CD4-positive, alpha-beta T cell (primary cell): ENCODE measurements at regions of chr7 and their contacts with region 1.

Region 1: DNA sequence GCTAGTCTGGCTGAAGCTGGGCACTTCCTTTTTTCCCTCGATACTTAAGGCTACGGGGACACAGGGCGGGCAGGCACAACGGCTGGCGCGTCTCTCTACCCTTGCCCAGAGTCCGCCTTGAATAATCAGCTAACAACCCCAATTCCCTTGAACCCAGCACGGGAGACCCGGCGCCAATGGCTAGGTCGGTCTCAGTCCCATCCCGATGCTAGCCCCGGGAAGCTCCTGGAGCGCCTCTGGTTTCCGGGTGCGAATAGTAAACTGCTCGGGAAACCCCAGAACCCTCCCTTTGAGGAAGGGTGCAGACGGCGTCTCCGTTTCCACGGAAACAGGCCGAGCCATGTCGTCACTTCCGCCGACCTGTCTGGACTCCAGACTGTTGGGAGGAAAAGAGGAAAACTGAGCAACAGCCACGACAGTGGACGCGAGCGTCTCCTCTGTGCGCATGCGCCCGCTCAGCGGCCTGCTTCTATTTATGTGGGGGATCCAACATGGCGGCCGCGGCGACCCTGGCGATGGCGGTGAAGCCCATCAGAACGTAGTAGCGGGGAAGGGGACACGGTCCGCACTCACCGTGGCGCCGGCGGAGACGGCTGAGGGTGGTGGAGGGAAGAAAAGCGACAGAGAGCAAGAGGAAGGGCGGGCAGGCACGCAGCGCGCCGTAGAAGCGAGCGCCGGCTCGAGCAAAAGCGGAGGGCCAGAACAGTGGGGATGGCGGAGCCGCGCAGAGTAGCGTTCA is at the start of gene UBN2:
- DNase-seq: peak; percentile 70 to 96 (median 85)
- ATAC-seq: peak; percentile 66
- H3K4me3 ChIP-seq: peak within 1 kb of the TSS; percentile 97
- H3K4me3 Mint-ChIP-seq: peak within 1 kb of the TSS; percentile 97
- H3K27ac ChIP-seq: peak within 1 kb of the TSS; percentile 60 to 74
- H3K27ac Mint-ChIP-seq: peak within 1 kb of the TSS; percentile 89
- H3K4me1 ChIP-seq: peaks cover 11% of the 10 kb centered on the region
- H3K4me1 Mint-ChIP-seq: peaks cover 48% of the 10 kb centered on the region
- H3K27me3 ChIP-seq: no peaks in the 10 kb centered on the region
- H3K27me3 Mint-ChIP-seq: peaks cover 5% of the 10 kb centered on the region
- CTCF ChIP-seq: no peak
- total RNA-seq, gene UBN2: 9.6 to 13.3 TPM

Region 2: DNA sequence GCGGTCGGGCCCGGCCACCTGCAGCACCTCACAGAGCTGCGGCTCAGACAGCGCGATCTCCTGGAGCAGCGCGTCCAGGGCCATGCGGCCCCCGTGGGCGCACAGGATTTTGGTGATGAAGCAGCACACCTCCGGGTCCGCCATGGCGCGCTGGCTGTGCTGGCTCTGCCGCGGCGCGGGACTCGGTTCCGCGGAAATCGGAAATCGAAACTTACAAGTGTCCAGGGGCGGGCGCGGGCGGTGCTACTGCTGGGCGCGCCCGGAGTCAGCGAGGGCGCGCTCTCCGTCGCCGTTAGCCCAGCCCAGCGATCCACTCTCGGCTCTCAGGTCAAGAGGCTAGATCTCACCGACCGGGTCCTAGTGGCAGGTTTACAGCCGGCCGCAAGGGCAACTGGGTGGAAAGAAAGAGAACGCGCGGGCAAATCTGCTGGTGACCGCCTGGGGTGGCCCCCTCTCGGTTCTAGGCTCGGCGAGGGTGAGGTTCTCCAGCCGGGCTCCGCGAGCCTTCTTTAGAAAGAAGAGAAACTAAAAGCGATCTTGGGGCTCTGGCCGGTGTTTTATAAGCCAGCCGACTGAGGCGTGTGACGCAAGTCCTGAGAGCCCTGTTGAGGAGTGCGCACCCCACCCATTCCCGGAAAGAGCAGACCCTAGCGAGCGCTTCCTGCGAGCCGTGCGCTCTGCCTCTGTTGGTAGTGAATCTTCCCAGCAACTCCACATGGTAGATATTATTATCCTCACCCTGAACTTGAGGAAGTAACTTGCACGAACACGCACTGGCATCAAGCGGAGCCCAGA is 121.6 kb before region 1 on chr7 and contains the start of gene ZC3HAV1:
- CTCF ChIA-PET with region 1: no interaction called
- POLR2A ChIA-PET with region 1: no interaction called
- intact Hi-C with region 1: loop called in 1 of 2 experiments (anchors 5 kb)
- DNase-seq: peak; percentile 80 to 97 (median 88)
- ATAC-seq: peak; percentile 86
- H3K4me3 ChIP-seq: peak within 1 kb of the TSS; percentile 97
- H3K4me3 Mint-ChIP-seq: peak within 1 kb of the TSS; percentile 99
- H3K27ac ChIP-seq: peak within 1 kb of the TSS; percentile 97 to 98
- H3K27ac Mint-ChIP-seq: peak within 1 kb of the TSS; percentile 95
- H3K4me1 ChIP-seq: peaks cover 35% of the 10 kb centered on the region
- H3K4me1 Mint-ChIP-seq: peaks cover 52% of the 10 kb centered on the region
- H3K27me3 ChIP-seq: no peaks in the 10 kb centered on the region
- H3K27me3 Mint-ChIP-seq: no peaks in the 10 kb centered on the region
- CTCF ChIP-seq: no peak
- total RNA-seq, gene ZC3HAV1: 169 to 178 TPM

Region 3: DNA sequence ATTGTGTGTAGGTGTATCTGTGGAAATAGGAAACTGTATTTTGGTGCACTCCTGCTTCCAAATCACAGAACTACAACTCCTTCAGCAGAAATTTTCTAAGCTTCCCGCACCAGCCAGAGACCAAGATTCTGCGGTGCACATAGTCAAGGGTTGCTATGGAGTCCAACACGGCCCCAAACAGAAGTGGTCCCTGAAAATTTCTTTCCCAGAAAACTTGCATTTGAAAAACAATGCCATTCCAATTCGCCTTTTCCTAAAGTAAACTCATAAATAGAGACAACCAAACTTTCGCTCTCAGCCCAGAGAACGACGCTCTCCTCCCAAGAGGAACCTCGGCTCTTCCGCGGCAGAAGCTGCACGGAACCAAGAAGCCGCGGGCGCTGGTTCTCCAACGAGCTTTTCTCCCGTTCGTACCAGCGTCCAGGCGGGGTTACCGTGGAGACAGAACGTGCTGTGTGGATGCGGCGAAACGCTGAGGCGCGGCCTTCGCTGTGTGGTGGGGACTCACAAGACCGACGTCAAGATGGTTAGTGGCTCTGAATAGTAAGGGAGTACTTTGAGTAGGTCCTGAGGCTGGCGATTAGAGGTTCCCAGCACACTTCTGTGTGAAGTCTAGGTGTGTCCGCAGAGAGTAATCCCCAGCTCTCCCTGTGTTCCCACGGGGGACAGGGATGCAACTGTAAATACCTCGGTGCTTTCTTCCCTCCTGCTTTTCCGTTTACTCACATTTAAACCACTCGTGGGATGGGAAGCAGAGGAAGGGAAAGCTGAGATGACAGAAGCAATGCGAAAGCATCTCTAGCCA is 97.4 kb before region 1 on chr7:
- CTCF ChIA-PET with region 1: no interaction called
- POLR2A ChIA-PET with region 1: interaction called, 3 read pairs
- intact Hi-C with region 1: loop called in 1 of 2 experiments (anchors 2 kb)
- DNase-seq: peak; percentile 81 to 94 (median 86)
- ATAC-seq: peak; percentile 98
- H3K4me3 ChIP-seq: peak overlapping the region; percentile 68
- H3K4me3 Mint-ChIP-seq: peak overlapping the region; percentile 89
- H3K27ac ChIP-seq: peak overlapping the region; percentile 35 to 65
- H3K27ac Mint-ChIP-seq: peak overlapping the region; percentile 83
- H3K4me1 ChIP-seq: peaks cover 18% of the 10 kb centered on the region
- H3K4me1 Mint-ChIP-seq: peaks cover 14% of the 10 kb centered on the region
- H3K27me3 ChIP-seq: no peaks in the 10 kb centered on the region
- H3K27me3 Mint-ChIP-seq: no peaks in the 10 kb centered on the region
- CTCF ChIP-seq: no peak

Region 4: GRCh38 chr7:139159900-139160675 is 70.9 kb before region 1 on chr7:
- CTCF ChIA-PET with region 1: no interaction called
- POLR2A ChIA-PET with region 1: no interaction called
- intact Hi-C with region 1: no loop called
- DNase-seq: no peak
- ATAC-seq: no peak
- H3K4me3 ChIP-seq: no peak overlapping the region
- H3K4me3 Mint-ChIP-seq: no peak overlapping the region
- H3K27ac ChIP-seq: no peak overlapping the region
- H3K27ac Mint-ChIP-seq: no peak overlapping the region
- H3K4me1 ChIP-seq: no peaks in the 10 kb centered on the region
- H3K4me1 Mint-ChIP-seq: no peaks in the 10 kb centered on the region
- H3K27me3 ChIP-seq: no peaks in the 10 kb centered on the region
- H3K27me3 Mint-ChIP-seq: no peaks in the 10 kb centered on the region
- CTCF ChIP-seq: no peak

Region 5: GRCh38 chr7:139340037-139340807 is 109.3 kb after region 1 on chr7:
- CTCF ChIA-PET with region 1: no interaction called
- POLR2A ChIA-PET with region 1: interaction called, 4 read pairs
- intact Hi-C with region 1: loop called (anchors 5 kb)
- DNase-seq: peak; percentile 95 to 100 (median 97)
- ATAC-seq: peak; percentile 82
- H3K4me3 ChIP-seq: peak overlapping the region; percentile 79
- H3K4me3 Mint-ChIP-seq: peak overlapping the region; percentile 94
- H3K27ac ChIP-seq: peak overlapping the region; percentile 98 to 99
- H3K27ac Mint-ChIP-seq: peak overlapping the region; percentile 99
- H3K4me1 ChIP-seq: peaks cover 19% of the 10 kb centered on the region
- H3K4me1 Mint-ChIP-seq: peaks cover 43% of the 10 kb centered on the region
- H3K27me3 ChIP-seq: no peaks in the 10 kb centered on the region
- H3K27me3 Mint-ChIP-seq: peaks cover 8% of the 10 kb centered on the region
- CTCF ChIP-seq: peak; percentile 43